ENCODE measurements at regions of chr9 and their contacts with region 1.

Region 1: GRCh38 chr9:114681594-114682332 is at the start of gene TEX48:
- DNase-seq: peak; percentile 52
- H3K4me3 ChIP-seq: no peak within 1 kb of the TSS
- H3K27ac ChIP-seq: no peak within 1 kb of the TSS
- H3K4me1 ChIP-seq: peaks cover 23% of the 10 kb centered on the region
- H3K27me3 ChIP-seq: no peaks in the 10 kb centered on the region
- CTCF ChIP-seq: peak; percentile 67 to 78
- POLR2A ChIP-seq: no peak
- total RNA-seq, gene TEX48: not detected in 2 replicates

Region 2: DNA sequence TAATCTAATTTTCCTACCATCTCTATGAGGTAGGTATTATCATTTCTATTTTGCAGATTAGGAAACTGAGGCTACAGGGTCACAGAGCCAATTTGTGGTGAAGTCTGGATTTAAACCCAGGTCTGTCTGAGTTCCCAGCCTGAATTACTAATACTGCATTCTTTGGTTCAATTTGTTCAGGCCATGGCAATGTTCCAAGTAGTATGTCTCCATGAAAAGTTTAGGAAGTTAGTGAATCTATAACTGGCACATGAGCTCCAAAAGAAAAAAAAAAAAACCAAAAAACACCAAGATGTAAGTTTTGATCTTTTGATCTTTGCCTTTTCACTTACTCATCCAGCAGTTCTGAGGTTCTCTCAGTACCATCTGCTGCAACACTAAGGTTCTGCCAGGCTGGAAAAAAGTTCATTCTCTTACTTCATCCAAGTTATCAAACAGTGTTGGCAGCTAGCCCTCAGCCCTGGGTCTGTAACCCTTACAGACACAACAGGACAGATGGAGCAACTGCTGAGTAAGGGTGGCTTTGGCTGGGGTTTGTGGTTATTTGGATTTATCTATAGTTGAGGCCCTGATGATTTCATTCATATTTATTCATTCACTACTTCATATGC is 75.1 kb before region 1 on chr9:
- CTCF ChIA-PET with region 1: no interaction called
- POLR2A ChIA-PET with region 1: no interaction called
- dilution Hi-C with region 1: no loop called
- intact Hi-C with region 1: no loop called
- DNase-seq: peak; percentile 68
- H3K4me3 ChIP-seq: no peak overlapping the region
- H3K27ac ChIP-seq: no peak overlapping the region
- H3K4me1 ChIP-seq: peaks cover 11% of the 10 kb centered on the region
- H3K27me3 ChIP-seq: no peaks in the 10 kb centered on the region
- CTCF ChIP-seq: no peak
- POLR2A ChIP-seq: no peak

Region 3: GRCh38 chr9:114662081-114662989 is 19.4 kb before region 1 on chr9:
- CTCF ChIA-PET with region 1: interaction called, 17 read pairs
- POLR2A ChIA-PET with region 1: no interaction called
- dilution Hi-C with region 1: no loop called
- intact Hi-C with region 1: loop called (anchors 1 kb)
- DNase-seq: peak; percentile 50
- H3K4me3 ChIP-seq: no peak overlapping the region
- H3K27ac ChIP-seq: no peak overlapping the region
- H3K4me1 ChIP-seq: no peaks in the 10 kb centered on the region
- H3K27me3 ChIP-seq: peaks cover 5 to 9% of the 10 kb centered on the region in 2 experiments
- CTCF ChIP-seq: peak; percentile 79 to 80
- POLR2A ChIP-seq: no peak

Region 4: DNA sequence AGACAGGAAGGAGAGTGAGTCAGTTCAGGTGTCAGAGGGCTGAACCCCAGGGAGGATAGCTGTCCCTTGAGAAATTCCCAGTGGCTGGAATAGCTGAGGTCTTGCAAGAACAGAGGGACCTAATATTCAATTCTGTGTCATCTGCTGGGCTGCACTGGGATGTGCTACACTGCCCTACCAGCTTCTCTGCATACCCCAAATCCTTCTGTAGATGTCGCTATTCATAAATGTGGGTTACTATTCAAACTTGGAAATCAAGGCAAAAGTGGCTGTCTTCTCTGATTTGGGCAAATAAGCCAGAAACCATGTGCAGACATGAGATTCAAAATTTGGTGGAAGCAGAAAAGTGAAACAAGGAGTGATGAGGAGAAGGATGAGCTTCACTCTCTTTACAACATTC is 232.4 kb after region 1 on chr9:
- CTCF ChIA-PET with region 1: interaction called, 270 read pairs
- POLR2A ChIA-PET with region 1: no interaction called
- dilution Hi-C with region 1: no loop called
- intact Hi-C with region 1: loop called (anchors 1 kb)
- DNase-seq: no peak
- H3K4me3 ChIP-seq: no peak overlapping the region
- H3K27ac ChIP-seq: no peak overlapping the region
- H3K4me1 ChIP-seq: no peaks in the 10 kb centered on the region
- H3K27me3 ChIP-seq: peaks cover 3 to 11% of the 10 kb centered on the region in 2 experiments
- CTCF ChIP-seq: no peak
- POLR2A ChIP-seq: no peak